MCF 10A (cell line): ENCODE measurements at regions of chr1 and their contacts with region 1.

Region 1: DNA sequence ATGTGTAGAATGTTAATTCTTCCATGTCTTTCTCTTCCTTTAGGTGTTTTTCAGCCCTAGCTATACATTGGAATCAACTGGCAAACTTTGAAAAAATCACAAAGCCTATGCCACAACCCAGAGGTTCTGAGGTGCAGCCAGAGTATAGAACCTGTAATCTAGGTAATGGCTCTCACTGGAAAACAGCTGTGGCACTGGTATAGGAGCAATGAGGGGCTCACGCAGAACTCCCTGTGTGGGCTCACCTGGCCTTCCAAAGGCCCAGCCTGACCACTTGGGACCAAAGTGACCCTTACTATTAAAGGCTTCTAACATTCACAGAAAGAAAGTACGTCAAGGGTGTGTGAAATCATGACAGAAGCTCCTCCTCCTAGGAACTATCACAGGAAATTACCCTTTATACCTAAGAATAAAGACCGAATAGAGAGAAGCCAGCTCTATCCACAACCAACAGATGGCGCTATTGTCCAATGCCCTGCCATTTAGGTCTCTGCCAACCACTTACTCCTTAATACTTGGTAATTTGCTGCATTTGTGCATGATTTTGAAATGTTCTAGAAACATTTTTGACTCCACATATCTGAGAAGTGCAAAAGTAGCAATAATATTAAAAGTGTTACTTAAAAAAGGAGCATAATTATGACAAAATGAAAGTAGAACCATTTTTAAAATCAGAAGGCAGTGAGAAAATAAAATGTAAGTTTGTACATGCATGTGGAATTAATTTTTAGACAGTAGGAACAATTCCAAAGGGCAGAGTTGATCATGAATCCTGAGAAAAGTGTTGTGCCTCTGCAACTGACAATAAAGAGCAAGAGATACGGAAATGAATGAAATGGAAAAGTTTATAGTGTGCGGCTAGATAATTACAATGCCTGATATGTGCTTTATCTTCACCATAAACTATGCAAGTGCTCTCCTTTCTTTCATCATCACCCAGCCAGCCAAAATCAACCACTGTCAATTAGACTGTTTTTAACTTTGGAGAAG is 93.1 kb upstream of the HAO2 start:
- DNase-seq: peak; percentile 72
- H3K4me3 Mint-ChIP-seq: no peak overlapping the region
- H3K27ac Mint-ChIP-seq: no peak overlapping the region
- H3K4me1 Mint-ChIP-seq: peaks cover 18% of the 10 kb centered on the region
- H3K27me3 Mint-ChIP-seq: no peaks in the 10 kb centered on the region
- CTCF ChIP-seq: peak; percentile 85

Region 2: GRCh38 chr1:118077331-118078055 is 1197.9 kb before region 1 on chr1:
- CTCF ChIA-PET with region 1: interaction called, 8 read pairs
- POLR2A ChIA-PET with region 1: no interaction called
- intact Hi-C with region 1: loop called (anchors 10 kb)
- DNase-seq: peak; percentile 63
- H3K4me3 Mint-ChIP-seq: no peak overlapping the region
- H3K27ac Mint-ChIP-seq: no peak overlapping the region
- H3K4me1 Mint-ChIP-seq: no peaks in the 10 kb centered on the region
- H3K27me3 Mint-ChIP-seq: no peaks in the 10 kb centered on the region
- CTCF ChIP-seq: peak; percentile 65

Region 3: DNA sequence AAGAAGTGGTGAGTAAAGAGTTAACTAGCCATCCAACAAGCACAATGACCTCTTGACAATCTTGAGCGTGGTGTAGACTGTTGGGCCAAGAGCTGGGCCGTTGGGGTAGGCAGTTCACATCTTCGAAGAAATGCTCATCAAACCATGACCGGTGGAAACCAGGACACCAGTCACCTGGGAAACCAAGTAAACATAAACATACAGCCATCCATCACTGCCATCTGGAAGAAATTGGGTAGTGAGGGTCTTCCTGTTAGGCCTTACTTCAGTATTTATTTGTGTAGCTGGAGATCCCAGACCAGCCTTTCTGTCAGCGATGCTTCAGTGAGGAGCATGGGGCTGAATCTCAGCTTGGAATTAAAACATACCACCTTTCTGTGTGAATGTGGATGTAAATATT is 14.9 kb before region 1 on chr1:
- CTCF ChIA-PET with region 1: interaction called, 16 read pairs
- POLR2A ChIA-PET with region 1: interaction called, 3 read pairs
- intact Hi-C with region 1: no loop called
- DNase-seq: no peak
- H3K4me3 Mint-ChIP-seq: no peak overlapping the region
- H3K27ac Mint-ChIP-seq: no peak overlapping the region
- H3K4me1 Mint-ChIP-seq: no peaks in the 10 kb centered on the region
- H3K27me3 Mint-ChIP-seq: no peaks in the 10 kb centered on the region
- CTCF ChIP-seq: no peak

Region 4: GRCh38 chr1:119291611-119292206 is 16.3 kb after region 1 on chr1:
- CTCF ChIA-PET with region 1: interaction called, 10 read pairs
- POLR2A ChIA-PET with region 1: no interaction called
- intact Hi-C with region 1: loop called (anchors 1 kb)
- DNase-seq: no peak
- H3K4me3 Mint-ChIP-seq: no peak overlapping the region
- H3K27ac Mint-ChIP-seq: no peak overlapping the region
- H3K4me1 Mint-ChIP-seq: peaks cover 13% of the 10 kb centered on the region
- H3K27me3 Mint-ChIP-seq: peaks cover 23% of the 10 kb centered on the region
- CTCF ChIP-seq: no peak

Region 5: DNA sequence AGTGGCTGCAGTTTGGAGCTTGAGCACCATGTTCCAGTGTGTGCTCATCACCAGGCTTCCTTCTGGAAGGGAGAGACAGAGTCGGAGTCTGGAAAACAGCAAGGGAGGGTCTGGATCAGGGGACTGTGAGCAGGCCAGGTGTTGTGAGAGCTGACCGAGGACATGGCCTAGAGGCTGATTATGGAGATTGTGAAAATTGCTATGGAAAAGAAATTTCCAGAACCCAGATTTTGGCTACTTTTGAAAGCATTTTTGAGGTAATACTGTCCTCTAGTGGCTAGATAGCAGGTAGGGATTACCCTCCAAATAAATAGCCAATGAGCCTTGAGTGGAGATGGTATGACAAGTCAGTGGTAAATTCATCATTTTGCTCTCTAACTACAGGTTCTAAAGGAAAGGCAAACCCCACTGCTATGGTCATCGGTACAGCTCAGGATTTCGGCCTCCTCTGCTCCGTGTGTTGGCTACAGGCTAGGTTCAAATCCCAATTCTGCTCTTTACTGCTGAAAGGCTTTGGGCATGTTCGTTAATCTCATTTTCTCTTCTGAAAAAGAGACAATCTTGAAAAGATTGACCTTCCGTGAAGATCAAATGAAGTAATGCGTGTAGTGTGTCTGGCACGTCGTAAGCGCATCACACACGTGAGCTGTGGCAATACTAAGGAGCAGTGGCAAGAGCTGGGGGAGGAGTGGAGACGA is 92.1 kb after region 1 on chr1:
- CTCF ChIA-PET with region 1: interaction called, 116 read pairs
- POLR2A ChIA-PET with region 1: interaction called, 5 read pairs
- intact Hi-C with region 1: loop called (anchors 1 kb)
- DNase-seq: peak; percentile 60
- H3K4me3 Mint-ChIP-seq: no peak overlapping the region
- H3K27ac Mint-ChIP-seq: no peak overlapping the region
- H3K4me1 Mint-ChIP-seq: peaks cover 14% of the 10 kb centered on the region
- H3K27me3 Mint-ChIP-seq: no peaks in the 10 kb centered on the region
- CTCF ChIP-seq: peak; percentile 94